Mammary epithelial cell (primary cell): ENCODE measurements at regions of chr3 and their contacts with region 1.

Region 1: DNA sequence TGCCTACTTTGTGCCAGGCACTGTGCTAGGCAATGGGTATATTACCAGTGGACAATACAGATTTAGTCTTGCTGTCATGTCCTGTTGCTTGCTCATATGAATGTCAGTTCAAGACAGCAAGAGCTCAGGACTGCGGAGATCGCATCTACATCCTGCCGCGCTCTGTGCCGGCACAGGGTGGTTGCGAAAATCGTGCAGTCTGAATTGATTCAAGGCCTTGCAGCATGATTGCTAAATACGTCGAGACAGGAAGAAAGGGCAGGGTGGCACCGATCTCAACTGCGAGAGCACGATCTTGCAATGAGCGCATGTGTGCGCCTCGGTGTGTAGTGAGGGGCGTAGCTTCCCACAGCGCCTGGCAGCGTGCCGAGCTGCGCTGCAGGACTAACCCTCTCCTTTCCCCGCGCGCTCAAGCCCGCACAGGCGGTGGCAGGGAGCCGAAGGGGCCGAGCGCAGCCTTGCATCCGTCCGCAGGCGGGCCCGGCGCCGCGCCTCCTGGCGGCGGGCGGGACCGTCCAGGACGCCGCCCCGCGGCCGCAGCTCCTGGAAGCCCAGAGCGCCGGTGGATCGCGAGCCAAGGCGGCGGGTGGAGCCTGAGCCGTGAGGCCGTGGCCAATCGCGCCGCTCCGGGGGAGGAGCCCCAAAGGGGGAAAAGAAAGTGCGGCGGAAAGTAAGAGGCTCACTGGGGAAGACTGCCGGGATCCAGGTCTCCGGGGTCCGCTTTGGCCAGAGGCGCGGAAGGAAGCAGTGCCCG is at the start of gene IL1RAP:
- DNase-seq: peak; percentile 97
- H3K4me3 ChIP-seq: peak within 1 kb of the TSS; percentile 89 to 96 (median 93)
- H3K27ac ChIP-seq: peak within 1 kb of the TSS; percentile 88
- H3K4me1 ChIP-seq: peaks cover 31% of the 10 kb centered on the region
- H3K27me3 ChIP-seq: no peaks in the 10 kb centered on the region
- CTCF ChIP-seq: peak; percentile 39 to 42
- total RNA-seq, gene IL1RAP: 94.2 to 111 TPM

Region 2: GRCh38 chr3:189961525-189962161 is 551.9 kb before region 1 on chr3:
- CTCF ChIA-PET with region 1: no interaction called
- dilution Hi-C with region 1: no loop called
- in situ Hi-C with region 1: no loop called
- intact Hi-C with region 1: loop called (anchors 10 kb)
- DNase-seq: peak; percentile 82
- H3K4me3 ChIP-seq: no peak overlapping the region
- H3K27ac ChIP-seq: peak overlapping the region; percentile 2
- H3K4me1 ChIP-seq: peaks cover 18% of the 10 kb centered on the region
- H3K27me3 ChIP-seq: no peaks in the 10 kb centered on the region
- CTCF ChIP-seq: peak; percentile 90 to 97

Region 3: DNA sequence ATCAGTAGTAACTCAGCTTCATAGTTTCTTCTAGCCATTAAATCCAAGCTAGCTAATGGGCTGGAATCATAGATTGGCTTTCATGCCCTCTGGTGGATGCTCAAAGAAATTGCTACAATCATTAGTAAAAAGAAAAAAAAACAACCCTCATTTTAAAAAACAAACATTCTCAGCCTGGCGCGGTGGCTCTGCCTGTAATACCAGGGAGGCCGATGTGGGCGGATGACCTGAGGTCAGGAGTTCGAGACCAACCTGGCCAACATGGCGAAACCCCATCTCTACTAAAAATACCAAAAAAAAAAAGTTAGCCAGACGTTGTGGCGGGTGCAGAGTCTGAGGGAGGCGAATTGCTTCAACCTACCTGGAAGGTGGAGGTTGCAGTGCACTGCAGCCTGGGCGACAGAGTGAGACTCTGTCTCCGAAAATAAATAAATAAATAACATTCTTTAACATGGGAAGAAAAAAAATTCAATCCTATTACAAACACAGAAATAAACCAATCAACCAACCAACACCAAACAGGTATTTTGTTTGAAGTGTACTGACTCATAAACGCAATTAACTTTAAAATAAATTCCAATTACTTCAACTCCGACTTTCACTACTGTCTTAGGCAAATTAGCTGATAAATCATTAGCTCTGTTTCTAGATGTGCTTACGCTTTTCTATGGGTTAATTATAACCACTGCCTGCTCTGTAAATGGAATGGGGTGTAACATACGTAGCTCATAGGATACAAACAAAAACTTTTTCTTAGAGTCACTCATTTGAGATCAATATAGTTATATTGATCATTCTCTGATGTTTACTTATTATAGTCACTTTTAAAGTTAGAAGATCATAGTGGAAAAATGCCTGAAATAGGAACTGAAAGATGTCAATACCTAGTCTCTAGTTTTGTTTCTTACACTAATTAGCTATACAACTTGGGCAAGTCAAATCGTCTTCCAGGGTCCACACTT is 88.8 kb before region 1 on chr3:
- CTCF ChIA-PET with region 1: no interaction called
- dilution Hi-C with region 1: no loop called
- in situ Hi-C with region 1: no loop called
- intact Hi-C with region 1: loop called (anchors 1 kb)
- DNase-seq: peak; percentile 73
- H3K4me3 ChIP-seq: no peak overlapping the region
- H3K27ac ChIP-seq: no peak overlapping the region
- H3K4me1 ChIP-seq: peaks cover 5% of the 10 kb centered on the region
- H3K27me3 ChIP-seq: no peaks in the 10 kb centered on the region
- CTCF ChIP-seq: peak; percentile 44 to 64

Region 4: DNA sequence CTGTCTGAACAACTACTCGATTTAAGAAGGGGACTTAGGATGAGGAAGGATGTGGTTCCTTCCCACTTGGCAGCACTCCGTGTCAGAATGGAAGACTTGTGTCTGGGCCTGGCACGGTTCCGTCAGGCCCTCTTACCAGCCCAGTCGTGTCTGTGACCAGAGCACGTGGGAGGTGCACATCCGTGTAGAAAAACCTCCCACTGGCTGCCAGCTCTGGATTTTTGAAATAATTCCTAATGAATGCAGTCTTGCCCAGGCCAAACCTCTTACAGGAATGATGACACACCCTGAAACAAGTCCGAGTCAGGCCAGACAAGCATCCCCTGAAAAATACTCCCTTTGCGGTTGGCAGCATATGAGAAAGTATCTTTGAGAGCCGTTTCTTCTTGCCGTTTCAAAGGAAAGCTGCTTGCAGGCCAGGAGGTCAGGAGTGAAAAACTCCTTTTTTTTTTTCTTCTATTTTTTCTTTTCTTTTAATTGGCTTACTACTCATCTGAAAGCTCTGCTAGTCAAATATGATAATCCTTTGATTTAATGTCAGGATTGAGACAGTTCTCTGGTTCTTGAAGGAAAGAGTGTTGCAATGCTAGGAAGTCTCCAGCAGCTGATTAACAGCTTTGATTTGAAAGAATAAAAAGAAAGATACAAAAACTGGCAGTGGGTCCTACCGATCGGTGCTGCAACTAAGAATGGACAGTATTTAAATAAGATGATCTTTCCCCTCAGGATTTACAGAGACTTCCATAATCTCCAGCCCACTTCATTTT is 20.1 kb after region 1 on chr3:
- CTCF ChIA-PET with region 1: interaction called, 4 read pairs
- dilution Hi-C with region 1: no loop called
- in situ Hi-C with region 1: no loop called
- intact Hi-C with region 1: loop called (anchors 1 kb)
- DNase-seq: peak; percentile 98
- H3K4me3 ChIP-seq: peak overlapping the region; percentile 13 to 30 (median 19)
- H3K27ac ChIP-seq: peak overlapping the region; percentile 95
- H3K4me1 ChIP-seq: peaks cover 70% of the 10 kb centered on the region
- H3K27me3 ChIP-seq: no peaks in the 10 kb centered on the region
- CTCF ChIP-seq: no peak

Region 5: GRCh38 chr3:190566043-190566933 is 52.7 kb after region 1 on chr3:
- CTCF ChIA-PET with region 1: no interaction called
- dilution Hi-C with region 1: no loop called
- in situ Hi-C with region 1: no loop called
- intact Hi-C with region 1: loop called (anchors 1 kb)
- DNase-seq: peak; percentile 100
- H3K4me3 ChIP-seq: no peak overlapping the region
- H3K27ac ChIP-seq: peak overlapping the region; percentile 96
- H3K4me1 ChIP-seq: peaks cover 28% of the 10 kb centered on the region
- H3K27me3 ChIP-seq: no peaks in the 10 kb centered on the region
- CTCF ChIP-seq: no peak

Region 6: DNA sequence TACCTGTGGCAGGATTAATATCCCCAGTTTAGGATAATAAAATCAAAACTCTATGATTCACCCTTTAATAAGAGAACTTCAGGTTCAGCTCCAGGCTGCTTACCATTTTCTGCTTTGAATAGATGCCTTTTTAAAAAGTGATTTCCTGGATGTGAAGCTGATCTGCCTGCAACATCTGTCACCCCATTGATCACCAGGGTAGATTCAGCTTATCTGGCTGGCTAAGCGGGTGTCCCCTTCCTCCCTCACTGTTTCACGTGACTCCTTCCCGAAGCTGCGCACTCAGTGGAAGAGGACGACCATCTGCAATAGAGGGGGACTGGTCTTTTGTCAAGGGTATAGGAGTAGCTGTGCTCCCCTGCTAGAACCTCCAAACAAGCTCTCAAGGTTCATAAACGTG is 128.4 kb after region 1 on chr3:
- CTCF ChIA-PET with region 1: interaction called, 13 read pairs
- dilution Hi-C with region 1: no loop called
- in situ Hi-C with region 1: no loop called
- intact Hi-C with region 1: no loop called
- DNase-seq: no peak
- H3K4me3 ChIP-seq: no peak overlapping the region
- H3K27ac ChIP-seq: no peak overlapping the region
- H3K4me1 ChIP-seq: no peaks in the 10 kb centered on the region
- H3K27me3 ChIP-seq: no peaks in the 10 kb centered on the region
- CTCF ChIP-seq: no peak